Activated CD8-positive, alpha-beta T cell treated with anti-CD3 and anti-CD28 coated beads for 36 hours (primary cell): ENCODE measurements at regions of chr5 and their contacts with region 1.

Region 1: GRCh38 chr5:129760636-129761505 is 13.0 kb downstream of the MINAR2 start:
- DNase-seq: no peak
- ATAC-seq: no peak
- H3K4me3 Mint-ChIP-seq: no peak overlapping the region
- H3K27ac Mint-ChIP-seq: no peak overlapping the region
- H3K4me1 Mint-ChIP-seq: no peaks in the 10 kb centered on the region
- H3K27me3 Mint-ChIP-seq: peaks cover 7% of the 10 kb centered on the region
- CTCF ChIP-seq: no peak

Region 2: DNA sequence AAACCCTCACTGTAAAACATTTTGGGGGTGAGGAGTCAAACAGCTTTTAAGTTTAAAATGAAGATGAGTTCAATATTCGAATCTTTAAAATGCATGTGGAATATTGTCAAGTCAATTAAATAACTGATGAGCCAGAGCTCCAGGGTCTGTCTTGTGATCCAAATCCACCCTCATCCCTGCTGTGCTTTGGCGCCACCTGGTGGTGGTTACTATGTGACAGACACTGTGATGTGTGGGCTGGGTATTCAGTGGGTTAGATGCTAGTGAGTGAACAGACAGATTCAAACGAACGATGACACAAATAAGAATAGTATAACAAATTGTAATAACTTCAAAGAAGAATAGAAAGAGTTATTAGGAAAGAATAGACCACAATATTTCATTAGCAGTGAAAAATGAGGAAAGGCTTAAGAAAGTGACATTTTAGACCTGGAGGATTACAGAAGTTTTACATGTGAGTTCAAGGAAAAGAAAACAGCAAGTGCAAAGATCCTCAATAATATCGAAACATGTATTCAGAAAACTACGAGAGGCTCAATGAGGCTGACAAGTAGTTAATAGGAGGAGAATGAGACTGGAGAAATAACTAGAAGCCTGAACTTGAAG is 92.0 kb after region 1 on chr5:
- CTCF ChIA-PET with region 1: interaction called, 14 read pairs
- POLR2A ChIA-PET with region 1: no interaction called
- intact Hi-C with region 1: no loop called
- DNase-seq: peak; percentile 87
- ATAC-seq: peak; percentile 82
- H3K4me3 Mint-ChIP-seq: no peak overlapping the region
- H3K27ac Mint-ChIP-seq: no peak overlapping the region
- H3K4me1 Mint-ChIP-seq: no peaks in the 10 kb centered on the region
- H3K27me3 Mint-ChIP-seq: peaks cover 15% of the 10 kb centered on the region
- CTCF ChIP-seq: peak; percentile 85